ENCODE measurements at regions of chr19 and their contacts with region 1.

Region 1: GRCh38 chr19:37082307-37082706 is 4.1 kb downstream of the ZNF420 start:
- DNase-seq: no peak
- H3K4me3 ChIP-seq: no peak overlapping the region
- H3K27me3 ChIP-seq: no peaks in the 10 kb centered on the region
- CTCF ChIP-seq: no peak

Region 2: GRCh38 chr19:37045140-37045539 is 37.2 kb before region 1 on chr19:
- CTCF ChIA-PET with region 1: no interaction called
- POLR2A ChIA-PET with region 1: no interaction called
- DNase-seq: no peak
- H3K4me3 ChIP-seq: no peak overlapping the region
- H3K27me3 ChIP-seq: no peaks in the 10 kb centered on the region
- CTCF ChIP-seq: no peak

Region 3: DNA sequence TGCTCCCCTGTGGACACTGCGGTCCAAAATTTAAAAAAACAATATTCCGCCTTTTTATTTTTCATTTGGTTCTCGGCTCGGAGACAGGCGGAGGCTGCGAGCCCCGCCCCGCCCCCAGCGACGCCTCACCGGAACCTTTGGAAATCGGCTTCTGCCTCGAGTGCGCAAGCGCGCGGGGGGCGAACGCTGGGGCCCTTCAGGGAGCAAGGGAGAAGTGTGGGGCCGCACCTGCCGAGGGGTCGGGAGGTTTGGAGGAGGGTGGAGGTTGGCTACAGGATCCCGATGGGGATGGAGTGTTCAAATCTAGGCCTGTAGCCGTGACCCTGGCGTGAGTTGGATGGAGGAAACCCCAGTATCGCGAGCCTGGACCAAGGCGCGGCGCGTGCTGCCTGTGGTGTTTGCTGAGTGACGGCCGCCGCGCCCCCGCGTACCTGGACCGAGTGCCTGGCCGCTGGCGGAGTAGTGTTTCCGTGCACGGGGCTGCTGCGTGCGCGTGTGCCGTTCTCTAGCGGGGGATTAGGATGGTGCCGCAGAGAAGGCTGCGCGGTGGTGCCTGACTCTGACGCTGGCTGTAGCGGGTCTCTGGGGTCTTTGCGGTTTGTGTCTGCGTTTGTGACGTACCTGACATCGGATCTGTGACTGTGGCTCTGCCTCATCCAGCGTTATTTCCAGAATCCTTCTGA is 573.5 kb after region 1 on chr19:
- CTCF ChIA-PET with region 1: interaction called, 10 read pairs
- POLR2A ChIA-PET with region 1: no interaction called
- DNase-seq: peak; percentile 30
- H3K4me3 ChIP-seq: peak overlapping the region; percentile 80
- H3K27me3 ChIP-seq: no peaks in the 10 kb centered on the region
- CTCF ChIP-seq: no peak